ENCODE measurements at regions of chr19 and their contacts with region 1.

Region 1: GRCh38 chr19:12187625-12188024 is 24.7 kb downstream of the ZNF136 start:
- DNase-seq: no peak
- ATAC-seq: no peak
- H3K4me3 Mint-ChIP-seq: no peak overlapping the region
- H3K27ac Mint-ChIP-seq: no peak overlapping the region
- H3K4me1 Mint-ChIP-seq: peaks cover 7% of the 10 kb centered on the region
- H3K27me3 Mint-ChIP-seq: no peaks in the 10 kb centered on the region

Region 2: GRCh38 chr19:11964858-11965645 is 222.6 kb before region 1 on chr19 and contains the start of gene ZNF763:
- CTCF ChIA-PET with region 1: no interaction called
- POLR2A ChIA-PET with region 1: no interaction called
- intact Hi-C with region 1: no loop called
- DNase-seq: peak; percentile 94
- ATAC-seq: peak; percentile 98
- H3K4me3 Mint-ChIP-seq: peak within 1 kb of the TSS; percentile 84
- H3K27ac Mint-ChIP-seq: peak within 1 kb of the TSS; percentile 73
- H3K4me1 Mint-ChIP-seq: peaks cover 20% of the 10 kb centered on the region
- H3K27me3 Mint-ChIP-seq: no peaks in the 10 kb centered on the region
- total RNA-seq, gene ZNF763: 1.1 to 1.2 TPM

Region 3: GRCh38 chr19:12075538-12076139 is 112.0 kb before region 1 on chr19:
- CTCF ChIA-PET with region 1: no interaction called
- POLR2A ChIA-PET with region 1: no interaction called
- intact Hi-C with region 1: loop called in 1 of 2 experiments (anchors 5 kb)
- DNase-seq: no peak
- ATAC-seq: no peak
- H3K4me3 Mint-ChIP-seq: no peak overlapping the region
- H3K27ac Mint-ChIP-seq: no peak overlapping the region
- H3K4me1 Mint-ChIP-seq: no peaks in the 10 kb centered on the region
- H3K27me3 Mint-ChIP-seq: no peaks in the 10 kb centered on the region

Region 4: GRCh38 chr19:12230751-12231733 is 43.4 kb after region 1 on chr19:
- CTCF ChIA-PET with region 1: no interaction called
- POLR2A ChIA-PET with region 1: no interaction called
- intact Hi-C with region 1: no loop called
- DNase-seq: no peak
- ATAC-seq: no peak
- H3K4me3 Mint-ChIP-seq: no peak overlapping the region
- H3K27ac Mint-ChIP-seq: no peak overlapping the region
- H3K4me1 Mint-ChIP-seq: no peaks in the 10 kb centered on the region
- H3K27me3 Mint-ChIP-seq: no peaks in the 10 kb centered on the region